ENCODE measurements at regions of chr21 and their contacts with region 1.

Region 1: DNA sequence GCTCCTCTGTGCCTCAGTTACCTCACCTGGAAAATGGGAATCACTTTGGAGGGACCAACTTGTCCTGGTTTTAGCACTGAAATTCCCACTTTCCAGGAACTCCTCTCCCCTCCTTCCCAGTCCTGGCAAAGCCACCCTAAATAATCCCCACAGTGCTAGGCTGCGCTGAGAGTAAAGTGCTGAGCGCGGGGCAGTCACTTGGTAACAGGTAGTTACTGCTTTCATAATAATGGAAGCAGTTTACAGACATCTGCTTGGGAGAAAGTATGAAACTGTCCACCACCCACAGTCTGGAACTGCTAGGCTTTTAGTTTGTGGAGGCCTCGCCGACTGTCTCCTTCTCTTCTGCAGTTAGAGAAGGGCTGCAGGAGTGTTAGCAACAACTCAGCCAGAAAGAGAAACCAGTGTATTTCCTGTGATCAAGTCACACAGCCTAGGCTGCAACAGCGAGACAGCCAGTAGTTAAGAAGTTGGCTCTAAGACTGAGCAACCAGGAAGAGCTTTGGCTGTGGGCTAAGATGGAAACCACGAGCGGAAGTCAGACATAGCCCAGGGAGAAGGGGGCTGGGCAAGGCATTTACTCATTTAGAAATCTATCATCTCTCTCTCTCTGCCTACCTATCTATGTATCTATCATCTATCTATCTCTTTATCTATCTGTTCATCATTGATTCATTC is 30.8 kb upstream of the ABCG1 start:
- DNase-seq: peak; percentile 84 to 91 (median 86)
- H3K4me3 ChIP-seq: peak overlapping the region; percentile 2 to 10
- H3K4me3 Mint-ChIP-seq: peak overlapping the region; percentile 74 to 89 (median 79)
- H3K27ac ChIP-seq: peak overlapping the region; percentile 73
- H3K27ac Mint-ChIP-seq: peak overlapping the region; percentile 90 to 99 (median 98)
- H3K4me1 ChIP-seq: peaks cover 92% of the 10 kb centered on the region
- H3K4me1 Mint-ChIP-seq: peaks cover 34 to 74% (median 60%) of the 10 kb centered on the region in 4 donors
- H3K27me3 ChIP-seq: no peaks in the 10 kb centered on the region
- H3K27me3 Mint-ChIP-seq: no peaks in the 10 kb centered on the region

Region 2: DNA sequence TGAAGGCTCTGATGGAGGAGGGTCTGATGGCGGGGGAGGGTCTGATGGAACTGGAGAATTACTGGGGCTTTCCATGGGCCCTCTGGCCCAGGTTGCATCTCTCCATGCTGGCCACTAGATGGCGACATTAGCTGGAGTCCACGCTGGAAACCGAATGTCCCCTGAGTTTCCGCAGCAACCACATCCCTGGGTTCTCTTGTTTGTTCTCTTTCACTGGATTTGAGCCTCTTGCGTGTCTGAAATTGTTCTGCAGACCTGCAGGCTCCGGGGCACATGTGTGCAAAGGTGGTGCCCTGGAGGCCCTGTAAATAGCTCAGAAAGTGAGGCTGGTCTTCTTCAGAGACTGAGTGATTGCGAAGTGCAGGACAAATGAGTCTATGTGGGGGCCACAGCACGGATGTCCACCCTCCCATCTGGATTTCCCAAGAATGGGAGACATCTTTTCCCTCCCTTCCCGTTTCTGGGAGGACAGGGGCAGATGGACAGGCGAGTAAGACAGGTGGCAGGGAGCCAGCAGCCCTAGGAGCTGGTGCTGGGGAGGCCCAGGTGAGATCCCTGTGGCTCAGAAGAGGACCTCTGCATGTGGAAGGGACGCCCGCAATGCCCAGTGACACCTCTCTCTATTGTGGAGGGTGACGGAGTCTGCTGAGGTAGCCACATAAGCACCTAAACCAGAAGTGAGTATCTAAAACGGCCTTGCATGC is 42.4 kb before region 1 on chr21:
- CTCF ChIA-PET with region 1: interaction called, 3 read pairs
- POLR2A ChIA-PET with region 1: no interaction called
- intact Hi-C with region 1: loop called (anchors 1 kb)
- DNase-seq: peak; percentile 67 to 72 (median 70)
- H3K4me3 ChIP-seq: no peak overlapping the region
- H3K4me3 Mint-ChIP-seq: peak overlapping the region in 1 of 8 donors; percentile 13
- H3K27ac ChIP-seq: no peak overlapping the region
- H3K27ac Mint-ChIP-seq: peak overlapping the region; percentile 28 to 89 (median 51)
- H3K4me1 ChIP-seq: peaks cover 4% of the 10 kb centered on the region
- H3K4me1 Mint-ChIP-seq: peaks cover 4 to 7% (median 5%) of the 10 kb centered on the region in 4 donors
- H3K27me3 ChIP-seq: no peaks in the 10 kb centered on the region
- H3K27me3 Mint-ChIP-seq: peaks cover 5 to 7% of the 10 kb centered on the region in 2 donors

Region 3: DNA sequence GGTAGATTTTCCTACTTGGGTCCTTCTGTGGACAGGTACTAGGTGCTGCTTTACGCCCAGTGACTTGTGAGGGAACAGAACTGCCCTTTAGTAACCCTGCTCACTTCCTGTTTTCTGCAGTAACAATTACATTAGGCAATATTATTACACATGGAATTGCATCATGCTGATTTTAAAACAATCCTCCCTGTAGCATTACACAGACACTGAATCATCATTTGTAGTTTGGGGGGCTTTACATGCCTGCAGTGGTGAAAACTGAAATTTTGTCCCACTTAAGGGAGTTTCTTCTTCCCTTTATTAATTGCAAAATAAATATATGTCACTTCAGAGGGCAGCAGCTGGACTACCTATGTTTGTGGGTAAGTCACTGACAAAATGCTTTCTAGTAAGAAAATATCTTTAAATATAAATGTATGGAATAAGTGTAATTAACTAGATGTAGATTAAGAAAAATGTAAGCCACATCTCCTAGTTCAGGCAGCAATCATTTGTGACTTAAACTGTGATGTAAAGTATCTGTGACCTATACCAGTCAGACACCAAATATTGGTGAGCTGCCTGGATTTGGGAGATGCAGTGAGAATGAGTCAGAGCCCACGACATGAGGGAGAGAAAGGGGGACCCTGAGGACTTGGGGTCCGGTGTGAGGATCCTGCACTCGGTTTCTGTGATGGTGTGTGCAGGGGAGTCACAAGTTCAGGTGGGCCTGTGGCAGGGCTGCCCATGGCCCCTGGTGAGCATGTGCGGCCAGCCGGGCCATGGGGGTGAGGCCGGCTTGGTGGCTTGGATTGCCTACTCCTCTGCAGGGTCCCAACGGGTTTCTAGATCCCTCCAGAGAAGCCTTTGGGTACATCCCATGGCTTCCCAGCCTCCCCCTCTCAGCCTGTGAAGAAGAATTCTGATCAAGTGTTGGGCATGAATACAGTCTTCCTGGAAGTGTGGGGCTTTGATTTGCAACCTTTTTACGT is 11.7 kb after region 1 on chr21:
- CTCF ChIA-PET with region 1: interaction called, 5 read pairs
- POLR2A ChIA-PET with region 1: interaction called, 22 read pairs
- intact Hi-C with region 1: loop called (anchors 1 kb)
- DNase-seq: peak; percentile 39 to 61 (median 43)
- H3K4me3 ChIP-seq: no peak overlapping the region
- H3K4me3 Mint-ChIP-seq: peak overlapping the region in 7 of 8 donors; percentile 59 to 81 (median 74)
- H3K27ac ChIP-seq: peak overlapping the region; percentile 1
- H3K27ac Mint-ChIP-seq: peak overlapping the region; percentile 80 to 89 (median 85)
- H3K4me1 ChIP-seq: peaks cover 36% of the 10 kb centered on the region
- H3K4me1 Mint-ChIP-seq: peaks cover 24 to 60% (median 42%) of the 10 kb centered on the region in 4 donors
- H3K27me3 ChIP-seq: no peaks in the 10 kb centered on the region
- H3K27me3 Mint-ChIP-seq: no peaks in the 10 kb centered on the region

Region 4: DNA sequence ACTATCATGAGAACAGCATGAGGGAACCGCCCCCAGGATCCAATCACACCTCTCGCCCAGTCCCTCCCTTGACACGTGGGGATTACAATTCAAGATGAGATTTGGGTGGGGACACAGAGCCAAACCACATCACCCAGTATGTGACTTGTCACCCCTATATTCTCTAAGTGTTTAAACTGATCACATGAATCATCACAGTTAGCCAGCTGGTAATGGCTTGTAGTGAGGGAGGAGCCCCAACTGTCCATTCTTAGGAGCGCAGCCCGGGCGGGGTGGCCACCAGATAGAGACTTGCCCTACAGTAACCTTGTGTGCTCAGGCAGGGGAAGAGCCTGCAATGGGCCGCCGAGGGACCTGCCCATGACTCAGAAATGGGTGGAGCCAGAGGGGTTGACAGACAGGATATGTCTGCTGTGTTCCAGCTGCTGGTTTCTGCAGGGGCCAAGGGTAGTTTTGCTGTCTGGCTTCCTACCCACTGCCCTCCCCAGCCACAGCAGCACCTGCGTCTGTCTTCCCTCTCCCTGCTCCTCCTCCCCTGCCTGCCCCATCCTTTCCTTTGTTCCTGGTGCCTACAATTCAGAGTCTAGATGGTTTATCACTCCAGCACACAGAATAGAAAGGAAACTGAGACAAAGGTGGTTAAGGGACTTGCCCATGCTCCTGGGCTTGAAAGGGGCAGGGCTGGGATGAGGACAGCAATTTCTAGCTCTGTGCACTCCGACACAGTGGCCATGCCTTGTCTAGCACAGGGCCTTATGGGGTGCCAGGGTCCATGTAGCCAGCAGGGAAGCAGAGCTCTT is 40.0 kb after region 1 on chr21:
- CTCF ChIA-PET with region 1: interaction called, 5 read pairs
- POLR2A ChIA-PET with region 1: interaction called, 42 read pairs
- intact Hi-C with region 1: loop called (anchors 1 kb)
- DNase-seq: peak; percentile 87 to 100 (median 90)
- H3K4me3 ChIP-seq: peak overlapping the region in 1 of 2 donors; percentile 17
- H3K4me3 Mint-ChIP-seq: peak overlapping the region; percentile 65 to 77 (median 70)
- H3K27ac ChIP-seq: peak overlapping the region; percentile 80
- H3K27ac Mint-ChIP-seq: peak overlapping the region; percentile 93 to 99 (median 98)
- H3K4me1 ChIP-seq: peaks cover 68% of the 10 kb centered on the region
- H3K4me1 Mint-ChIP-seq: peaks cover 40 to 90% (median 69%) of the 10 kb centered on the region in 4 donors
- H3K27me3 ChIP-seq: no peaks in the 10 kb centered on the region
- H3K27me3 Mint-ChIP-seq: no peaks in the 10 kb centered on the region

Region 5: DNA sequence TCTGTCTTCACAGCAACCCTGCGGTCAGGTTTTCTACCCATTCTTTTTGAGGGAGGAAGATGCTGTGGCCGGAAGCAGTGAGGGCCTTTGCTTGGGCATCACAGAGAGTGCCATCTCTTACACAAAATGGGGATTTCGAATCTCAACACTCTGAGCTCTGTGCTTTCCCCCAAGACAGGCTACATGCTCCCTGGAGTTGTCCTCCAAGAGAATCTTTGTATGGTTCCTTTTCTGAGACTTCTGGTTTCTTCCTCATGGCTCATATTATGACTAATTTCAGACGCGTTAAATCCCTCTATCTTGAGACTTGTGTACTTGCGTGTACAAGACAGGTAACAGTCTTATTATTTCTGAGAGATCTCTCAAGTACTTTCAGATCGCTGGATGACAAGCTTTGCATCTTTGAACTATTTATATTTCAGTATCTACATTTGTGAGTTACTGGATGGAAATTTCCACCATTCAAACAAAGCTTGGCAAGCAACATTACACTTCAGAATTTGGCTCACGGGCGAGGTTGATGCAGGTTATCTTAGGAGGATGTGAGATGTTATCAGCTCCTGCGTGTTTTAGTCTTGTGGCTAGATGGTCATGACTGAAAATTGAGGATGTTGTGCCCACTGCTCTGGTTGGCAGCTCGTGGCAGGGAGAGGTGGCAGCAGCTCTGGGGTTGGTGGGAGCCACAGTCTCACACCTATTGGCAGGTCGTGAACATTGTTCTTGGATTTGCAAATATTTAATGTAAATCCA is 50.2 kb after region 1 on chr21:
- CTCF ChIA-PET with region 1: interaction called, 6 read pairs
- POLR2A ChIA-PET with region 1: interaction called, 42 read pairs
- intact Hi-C with region 1: loop called (anchors 1 kb)
- DNase-seq: peak; percentile 77 to 89 (median 83)
- H3K4me3 ChIP-seq: peak overlapping the region in 1 of 2 donors; percentile 44
- H3K4me3 Mint-ChIP-seq: peak overlapping the region; percentile 49 to 88 (median 75)
- H3K27ac ChIP-seq: peak overlapping the region; percentile 96
- H3K27ac Mint-ChIP-seq: peak overlapping the region; percentile 88 to 99 (median 96)
- H3K4me1 ChIP-seq: peaks cover 66% of the 10 kb centered on the region
- H3K4me1 Mint-ChIP-seq: peaks cover 50 to 86% (median 59%) of the 10 kb centered on the region in 4 donors
- H3K27me3 ChIP-seq: no peaks in the 10 kb centered on the region
- H3K27me3 Mint-ChIP-seq: no peaks in the 10 kb centered on the region

Region 6: GRCh38 chr21:42550817-42551216 is 362.7 kb after region 1 on chr21:
- CTCF ChIA-PET with region 1: no interaction called
- POLR2A ChIA-PET with region 1: no interaction called
- intact Hi-C with region 1: no loop called
- DNase-seq: no peak
- H3K4me3 ChIP-seq: no peak overlapping the region
- H3K4me3 Mint-ChIP-seq: no peak overlapping the region
- H3K27ac ChIP-seq: no peak overlapping the region
- H3K27ac Mint-ChIP-seq: peak overlapping the region in 3 of 7 donors; percentile 8 to 26 (median 26)
- H3K4me1 ChIP-seq: no peaks in the 10 kb centered on the region
- H3K4me1 Mint-ChIP-seq: no peaks in the 10 kb centered on the region
- H3K27me3 ChIP-seq: no peaks in the 10 kb centered on the region
- H3K27me3 Mint-ChIP-seq: no peaks in the 10 kb centered on the region

Region 7: GRCh38 chr21:42724226-42724920 is 536.3 kb after region 1 on chr21:
- CTCF ChIA-PET with region 1: no interaction called
- POLR2A ChIA-PET with region 1: no interaction called
- intact Hi-C with region 1: no loop called
- DNase-seq: no peak
- H3K4me3 ChIP-seq: no peak overlapping the region
- H3K4me3 Mint-ChIP-seq: peak overlapping the region in 1 of 8 donors; percentile 44
- H3K27ac ChIP-seq: no peak overlapping the region
- H3K27ac Mint-ChIP-seq: peak overlapping the region in 2 of 7 donors; percentile 12 to 71
- H3K4me1 ChIP-seq: peaks cover 6% of the 10 kb centered on the region
- H3K4me1 Mint-ChIP-seq: peaks cover 0 to 12% (median 5%) of the 10 kb centered on the region in 4 donors
- H3K27me3 ChIP-seq: no peaks in the 10 kb centered on the region
- H3K27me3 Mint-ChIP-seq: peaks cover 0 to 5% of the 10 kb centered on the region in 2 donors